Colonic mucosa (tissue), 4 donors: ENCODE measurements at regions of chr14 and their contacts with region 1.

Region 1: GRCh38 chr14:36655963-36656686 is 5.5 kb upstream of the PAX9 start:
- DNase-seq: peak; percentile 54
- H3K4me3 ChIP-seq: peak overlapping the region; percentile 5
- H3K27ac ChIP-seq: no peak overlapping the region
- H3K4me1 ChIP-seq: peaks cover 6% of the 10 kb centered on the region
- H3K27me3 ChIP-seq: peaks cover 97% of the 10 kb centered on the region
- CTCF ChIP-seq: peak; percentile 30

Region 2: GRCh38 chr14:36866867-36867266 is 210.7 kb after region 1 on chr14:
- intact Hi-C with region 1: loop called (anchors 10 kb)
- DNase-seq: no peak
- H3K4me3 ChIP-seq: no peak overlapping the region
- H3K27ac ChIP-seq: no peak overlapping the region
- H3K4me1 ChIP-seq: no peaks in the 10 kb centered on the region
- H3K27me3 ChIP-seq: no peaks in the 10 kb centered on the region
- CTCF ChIP-seq: no peak